Mucosa of descending colon (tissue), 3 donors: ENCODE measurements at regions of chr12 and their contacts with region 1.

Region 1: DNA sequence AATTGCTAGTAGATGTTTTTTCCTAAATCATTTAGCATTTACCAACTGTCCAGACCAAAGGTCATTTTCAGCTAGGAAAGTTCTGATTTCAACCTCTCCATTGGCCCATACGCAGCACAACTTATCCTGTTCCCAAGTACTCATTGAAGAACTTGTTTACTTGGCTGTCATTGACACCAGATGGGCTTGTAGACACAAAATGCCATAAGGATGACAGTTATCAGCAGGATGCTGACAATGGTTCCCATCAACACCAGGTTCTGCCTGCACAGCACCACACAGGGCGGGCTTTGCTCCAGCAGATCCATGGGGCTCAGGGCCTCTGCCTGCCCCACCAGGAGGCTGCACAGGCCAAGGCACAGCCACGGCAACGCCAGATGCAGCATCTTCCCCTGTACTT is 36.5 kb upstream of the TMPRSS12 start:
- DNase-seq: no peak
- ATAC-seq: no peak
- H3K4me3 ChIP-seq: no peak overlapping the region
- H3K4me1 ChIP-seq: no peaks in the 10 kb centered on the region
- CTCF ChIP-seq: no peak

Region 2: GRCh38 chr12:50734409-50735263 is 71.5 kb before region 1 on chr12:
- intact Hi-C with region 1: no loop called
- DNase-seq: no peak
- ATAC-seq: no peak
- H3K4me3 ChIP-seq: no peak overlapping the region
- H3K4me1 ChIP-seq: no peaks in the 10 kb centered on the region
- CTCF ChIP-seq: no peak

Region 3: GRCh38 chr12:50751948-50752721 is 54.0 kb before region 1 on chr12:
- intact Hi-C with region 1: no loop called
- DNase-seq: no peak
- ATAC-seq: no peak
- H3K4me3 ChIP-seq: no peak overlapping the region
- H3K4me1 ChIP-seq: no peaks in the 10 kb centered on the region
- CTCF ChIP-seq: no peak

Region 4: DNA sequence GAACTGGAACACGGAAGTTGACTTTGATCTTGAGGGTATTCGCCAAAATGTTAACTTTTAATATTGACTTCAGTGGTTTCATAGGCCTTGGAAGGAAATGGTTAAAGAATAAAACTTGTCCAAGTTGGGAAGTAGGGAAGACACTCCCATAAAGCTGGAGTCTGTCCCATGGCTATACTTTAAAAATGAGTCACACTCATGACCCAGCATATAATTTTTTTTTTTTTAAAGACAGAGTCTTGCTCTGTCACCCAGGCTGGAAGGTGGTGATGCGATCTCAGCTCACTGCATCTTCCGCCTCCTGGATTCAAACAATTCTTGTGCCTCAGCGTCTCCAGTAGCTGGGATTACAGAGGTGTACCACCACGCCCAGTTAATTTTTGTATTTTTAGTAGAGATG is 56.1 kb after region 1 on chr12:
- intact Hi-C with region 1: no loop called
- DNase-seq: no peak
- ATAC-seq: peak; percentile 50
- H3K4me3 ChIP-seq: no peak overlapping the region
- H3K4me1 ChIP-seq: no peaks in the 10 kb centered on the region
- CTCF ChIP-seq: no peak

Region 5: DNA sequence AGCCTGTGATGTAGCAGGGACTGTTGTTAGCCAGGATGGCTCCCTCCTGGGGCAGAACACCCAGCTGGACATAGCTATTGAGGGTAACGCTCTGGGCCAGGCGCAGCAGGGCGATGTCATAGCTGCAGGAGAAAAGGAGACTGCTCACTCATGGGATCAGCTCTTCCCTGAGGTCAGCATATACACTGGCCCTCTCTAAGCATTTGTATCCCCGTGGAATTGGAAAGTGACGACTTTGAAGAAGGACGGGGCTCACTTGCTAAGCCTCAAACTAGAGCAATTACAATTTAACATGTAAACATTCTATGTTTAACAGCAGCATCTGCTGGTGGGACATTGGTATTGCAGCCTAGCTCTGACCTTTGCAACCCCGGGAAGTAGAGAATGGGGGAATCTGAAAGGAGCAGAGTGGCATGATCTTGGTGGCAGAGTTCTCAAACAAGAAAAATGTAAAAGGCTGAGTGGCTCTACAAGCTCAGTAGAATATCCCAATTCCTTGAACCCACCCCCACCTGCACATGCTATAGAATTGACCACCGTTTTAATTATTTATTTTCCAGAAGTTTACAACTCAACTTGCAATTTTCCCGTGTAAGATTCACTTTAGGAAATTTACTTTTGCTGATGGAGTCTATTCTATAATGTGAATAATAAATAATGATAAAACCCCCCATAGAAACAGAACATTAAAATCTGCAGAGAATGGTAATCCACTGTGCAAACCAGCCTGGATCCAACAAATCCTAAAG is 535.3 kb after region 1 on chr12:
- intact Hi-C with region 1: loop called in 1 of 2 experiments (anchors 10 kb)
- DNase-seq: peak in 2 of 3 donors; percentile 66 to 90
- ATAC-seq: peak; percentile 96
- H3K4me3 ChIP-seq: no peak overlapping the region
- H3K4me1 ChIP-seq: no peaks in the 10 kb centered on the region
- CTCF ChIP-seq: peak; percentile 91